ENCODE measurements at regions of chr7 and their contacts with region 1.

Region 1: GRCh38 chr7:129952653-129953560 is at the start of gene UBE2H:
- DNase-seq: peak; percentile 90
- ATAC-seq: peak; percentile 72
- H3K4me3 ChIP-seq: peak within 1 kb of the TSS; percentile 95
- H3K27ac ChIP-seq: peak within 1 kb of the TSS; percentile 85
- H3K4me1 ChIP-seq: peaks cover 6% of the 10 kb centered on the region
- H3K27me3 ChIP-seq: no peaks in the 10 kb centered on the region
- CTCF ChIP-seq: no peak
- POLR2A ChIP-seq: peak; percentile 85
- RAD21 ChIP-seq: no peak
- total RNA-seq, gene UBE2H: 34.6 and 39.2 TPM in 2 replicates

Region 2: DNA sequence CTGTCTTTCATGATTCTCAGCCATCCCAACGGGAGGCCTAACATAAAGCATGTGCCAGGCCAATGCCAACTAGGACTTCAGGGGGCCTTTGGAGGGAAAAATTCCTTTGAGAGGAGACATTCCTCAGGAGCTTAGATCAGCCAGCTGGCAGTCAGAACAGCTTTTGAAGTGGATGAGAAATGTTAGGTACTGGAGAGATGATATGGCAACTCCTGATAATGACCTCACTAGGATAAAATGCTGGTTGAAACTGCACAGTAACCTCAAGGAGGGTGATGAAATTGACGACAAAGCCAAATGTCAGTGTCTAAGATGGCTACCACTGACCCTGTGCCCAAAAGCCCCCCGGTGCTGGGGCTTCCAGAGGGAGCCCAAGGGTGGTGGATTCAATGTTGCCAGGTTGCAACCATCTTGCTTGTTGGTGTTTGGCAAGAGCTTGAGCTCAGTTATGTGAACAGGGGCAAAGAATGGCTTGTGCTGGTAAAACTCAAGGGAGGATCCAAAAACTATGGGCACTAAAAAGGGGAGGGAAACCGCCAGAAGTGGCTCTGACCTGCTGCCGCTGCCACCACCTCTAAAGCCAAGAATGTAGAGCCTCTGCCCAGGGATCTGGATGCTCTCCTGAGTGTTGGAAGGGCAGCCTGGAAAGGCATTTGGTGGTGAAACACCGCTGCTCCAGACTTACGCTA is 121.3 kb before region 1 on chr7:
- CTCF ChIA-PET with region 1: no interaction called
- POLR2A ChIA-PET with region 1: no interaction called
- dilution Hi-C with region 1: no loop called
- in situ Hi-C with region 1: no loop called
- intact Hi-C with region 1: loop called (anchors 1 kb)
- DNase-seq: peak; percentile 95
- ATAC-seq: peak; percentile 71
- H3K4me3 ChIP-seq: no peak overlapping the region
- H3K27ac ChIP-seq: peak overlapping the region; percentile 85
- H3K4me1 ChIP-seq: peaks cover 19% of the 10 kb centered on the region
- H3K27me3 ChIP-seq: no peaks in the 10 kb centered on the region
- CTCF ChIP-seq: no peak
- POLR2A ChIP-seq: no peak
- RAD21 ChIP-seq: no peak

Region 3: GRCh38 chr7:129843982-129844840 is 108.7 kb before region 1 on chr7:
- CTCF ChIA-PET with region 1: no interaction called
- POLR2A ChIA-PET with region 1: no interaction called
- dilution Hi-C with region 1: no loop called
- in situ Hi-C with region 1: no loop called
- intact Hi-C with region 1: no loop called
- DNase-seq: no peak
- ATAC-seq: no peak
- H3K4me3 ChIP-seq: no peak overlapping the region
- H3K27ac ChIP-seq: no peak overlapping the region
- H3K4me1 ChIP-seq: peaks cover 20% of the 10 kb centered on the region
- H3K27me3 ChIP-seq: no peaks in the 10 kb centered on the region
- CTCF ChIP-seq: no peak
- POLR2A ChIP-seq: no peak
- RAD21 ChIP-seq: no peak

Region 4: GRCh38 chr7:129859183-129859582 is 93.7 kb before region 1 on chr7:
- CTCF ChIA-PET with region 1: no interaction called
- POLR2A ChIA-PET with region 1: no interaction called
- dilution Hi-C with region 1: no loop called
- in situ Hi-C with region 1: no loop called
- intact Hi-C with region 1: loop called (anchors 5 kb)
- DNase-seq: peak; percentile 15
- ATAC-seq: no peak
- H3K4me3 ChIP-seq: no peak overlapping the region
- H3K27ac ChIP-seq: no peak overlapping the region
- H3K4me1 ChIP-seq: peaks cover 23% of the 10 kb centered on the region
- H3K27me3 ChIP-seq: no peaks in the 10 kb centered on the region
- CTCF ChIP-seq: no peak
- POLR2A ChIP-seq: no peak
- RAD21 ChIP-seq: no peak

Region 5: DNA sequence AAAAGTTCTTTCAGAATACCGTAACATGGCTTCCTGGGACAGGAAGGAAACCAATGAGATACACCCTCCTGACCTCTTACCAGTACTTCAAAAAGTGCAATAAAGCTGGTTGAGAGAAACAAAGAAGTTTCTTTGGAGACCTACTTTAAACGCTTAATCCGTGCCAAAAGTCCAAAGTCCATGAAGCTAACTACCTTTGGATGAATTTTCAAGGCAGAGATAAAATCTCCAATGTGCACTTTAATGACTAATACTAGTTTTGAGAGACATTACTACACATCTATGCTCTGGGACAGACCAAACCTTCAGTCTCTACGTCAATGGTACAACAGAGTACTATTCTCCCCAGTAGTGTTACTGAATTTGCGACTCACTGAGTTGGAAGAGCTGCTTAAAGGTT is 46.2 kb before region 1 on chr7:
- CTCF ChIA-PET with region 1: no interaction called
- POLR2A ChIA-PET with region 1: no interaction called
- dilution Hi-C with region 1: no loop called
- in situ Hi-C with region 1: no loop called
- intact Hi-C with region 1: loop called (anchors 5 kb)
- DNase-seq: no peak
- ATAC-seq: no peak
- H3K4me3 ChIP-seq: no peak overlapping the region
- H3K27ac ChIP-seq: no peak overlapping the region
- H3K4me1 ChIP-seq: peaks cover 2% of the 10 kb centered on the region; the same call in 1 of the 2 replicates
- H3K27me3 ChIP-seq: no peaks in the 10 kb centered on the region
- CTCF ChIP-seq: no peak
- POLR2A ChIP-seq: no peak
- RAD21 ChIP-seq: no peak

Region 6: GRCh38 chr7:129969807-129970446 is 17.0 kb after region 1 on chr7:
- CTCF ChIA-PET with region 1: no interaction called
- POLR2A ChIA-PET with region 1: interaction called, 3 read pairs
- dilution Hi-C with region 1: no loop called
- in situ Hi-C with region 1: no loop called
- intact Hi-C with region 1: loop called (anchors 2 kb)
- DNase-seq: peak; percentile 84
- ATAC-seq: peak; percentile 93
- H3K4me3 ChIP-seq: no peak overlapping the region
- H3K27ac ChIP-seq: peak overlapping the region; percentile 84
- H3K4me1 ChIP-seq: peaks cover 6% of the 10 kb centered on the region
- H3K27me3 ChIP-seq: no peaks in the 10 kb centered on the region
- CTCF ChIP-seq: no peak
- POLR2A ChIP-seq: no peak
- RAD21 ChIP-seq: no peak

Region 7: DNA sequence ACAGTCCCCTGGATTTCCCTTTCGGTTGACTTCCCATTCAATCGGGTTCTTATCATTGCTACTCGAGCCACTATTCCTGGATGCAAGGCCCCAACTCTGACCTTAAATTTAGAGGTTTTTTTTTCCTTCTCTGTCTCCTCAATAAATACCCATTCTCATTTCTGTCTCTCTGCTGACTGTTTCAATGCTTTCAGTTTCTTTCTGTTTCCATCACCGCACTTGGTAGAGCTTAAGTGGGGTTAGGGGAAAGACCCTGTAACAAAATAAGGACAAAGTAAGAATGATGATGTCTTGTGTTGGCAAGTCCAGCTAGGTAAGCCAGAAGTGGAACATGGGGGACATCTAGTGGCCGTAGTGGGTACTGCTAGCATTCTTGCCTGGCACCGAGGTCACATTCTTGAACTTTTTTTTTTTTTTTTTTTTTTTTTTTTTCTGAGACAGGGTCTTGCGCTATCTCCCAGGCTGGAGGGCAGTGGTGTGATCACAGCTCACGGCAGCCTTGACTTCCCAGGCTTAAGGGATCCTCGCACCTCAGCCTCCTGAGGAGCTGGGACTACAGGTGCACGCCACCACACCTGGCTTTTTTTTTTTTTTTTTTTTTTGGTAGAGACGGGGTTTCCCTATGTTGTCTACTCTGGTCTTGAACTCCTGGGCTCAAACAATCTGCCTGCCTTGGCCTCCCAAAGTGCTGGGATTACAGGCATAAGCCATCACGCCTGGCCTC is 57.9 kb after region 1 on chr7:
- CTCF ChIA-PET with region 1: interaction called, 3 read pairs
- POLR2A ChIA-PET with region 1: no interaction called
- dilution Hi-C with region 1: no loop called
- in situ Hi-C with region 1: no loop called
- intact Hi-C with region 1: loop called (anchors 1 kb)
- DNase-seq: peak; percentile 88
- ATAC-seq: peak; percentile 73
- H3K4me3 ChIP-seq: no peak overlapping the region
- H3K27ac ChIP-seq: peak overlapping the region; percentile 22
- H3K4me1 ChIP-seq: peaks cover 10% of the 10 kb centered on the region
- H3K27me3 ChIP-seq: no peaks in the 10 kb centered on the region
- CTCF ChIP-seq: peak; percentile 94
- POLR2A ChIP-seq: peak; percentile 60
- RAD21 ChIP-seq: peak; percentile 94

Measured in IMR-90 (cell line).